OCI-LY7 (cell line): ENCODE measurements at regions of chr4 and their contacts with region 1.

Region 1: DNA sequence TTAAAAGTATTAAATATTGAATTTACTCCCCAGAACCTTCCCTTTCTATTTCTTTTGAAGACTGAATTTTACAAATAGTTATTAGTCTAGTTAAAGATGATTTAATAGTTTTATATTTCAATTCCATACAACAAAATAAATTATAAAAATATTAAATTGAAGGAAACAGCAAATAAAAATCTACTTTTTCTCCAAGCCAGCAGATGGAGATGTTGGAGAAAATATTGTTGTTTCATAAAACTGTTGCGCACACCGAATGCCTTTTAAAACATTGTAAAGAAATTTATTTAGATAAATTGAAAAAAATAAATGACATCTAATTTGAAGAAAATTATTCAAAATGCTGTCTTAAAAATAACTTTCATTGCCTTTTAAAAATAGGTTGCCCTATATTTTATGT is 5.5 kb downstream of the GRIA2 start:
- DNase-seq: no peak
- H3K4me3 ChIP-seq: no peak overlapping the region
- H3K27ac ChIP-seq: no peak overlapping the region
- H3K4me1 ChIP-seq: no peaks in the 10 kb centered on the region
- CTCF ChIP-seq: no peak

Region 2: DNA sequence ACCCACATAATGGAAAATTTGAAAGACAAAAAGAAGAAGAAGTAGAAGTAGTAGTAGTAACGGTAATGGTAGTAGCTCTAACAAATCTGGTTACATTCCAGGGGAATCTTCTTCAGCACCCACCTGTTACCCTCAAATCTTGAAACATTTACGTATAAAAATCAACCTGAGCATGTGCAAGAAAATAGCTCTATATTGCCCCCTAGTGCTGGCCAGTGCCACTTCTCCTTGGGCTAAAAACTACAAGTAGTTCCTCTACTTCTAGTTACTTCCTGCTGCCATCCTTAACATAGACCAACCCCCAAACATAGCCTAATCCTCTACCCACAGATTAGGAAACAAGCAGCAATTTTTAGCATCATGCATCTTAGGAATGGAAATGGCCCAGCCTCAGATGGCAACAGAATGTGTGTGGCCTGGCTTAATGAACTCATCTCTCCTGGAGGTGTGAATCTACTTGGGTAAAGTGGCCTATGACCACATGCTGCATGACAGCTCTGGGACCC is 257.5 kb before region 1 on chr4:
- CTCF ChIA-PET with region 1: no interaction called
- POLR2A ChIA-PET with region 1: no interaction called
- intact Hi-C with region 1: no loop called
- DNase-seq: peak; percentile 37
- H3K4me3 ChIP-seq: no peak overlapping the region
- H3K27ac ChIP-seq: no peak overlapping the region
- H3K4me1 ChIP-seq: no peaks in the 10 kb centered on the region
- CTCF ChIP-seq: peak; percentile 82

Region 3: DNA sequence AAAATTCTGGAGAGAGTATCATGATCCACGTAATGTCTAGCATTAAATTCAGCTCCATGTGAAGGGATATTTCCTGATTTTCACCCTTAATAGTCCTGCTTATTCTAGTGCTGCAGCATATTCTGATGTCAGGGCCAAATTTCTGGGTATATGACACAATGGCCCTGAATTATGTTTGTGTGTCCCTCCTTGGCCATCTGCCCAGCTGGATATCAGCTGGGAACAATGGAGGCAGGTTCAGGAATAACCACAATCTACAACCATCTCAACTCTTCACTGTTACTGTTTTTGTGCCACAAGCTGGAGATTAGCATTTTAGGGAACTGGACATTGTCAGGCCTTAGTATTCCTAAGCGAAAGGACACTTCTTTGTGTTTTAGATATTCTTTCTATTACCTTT is 146.6 kb before region 1 on chr4:
- CTCF ChIA-PET with region 1: no interaction called
- POLR2A ChIA-PET with region 1: interaction called, 10 read pairs
- intact Hi-C with region 1: no loop called
- DNase-seq: no peak
- H3K4me3 ChIP-seq: no peak overlapping the region
- H3K27ac ChIP-seq: no peak overlapping the region
- H3K4me1 ChIP-seq: no peaks in the 10 kb centered on the region
- CTCF ChIP-seq: no peak